ENCODE measurements at regions of chr17 and their contacts with region 1.

Region 1: DNA sequence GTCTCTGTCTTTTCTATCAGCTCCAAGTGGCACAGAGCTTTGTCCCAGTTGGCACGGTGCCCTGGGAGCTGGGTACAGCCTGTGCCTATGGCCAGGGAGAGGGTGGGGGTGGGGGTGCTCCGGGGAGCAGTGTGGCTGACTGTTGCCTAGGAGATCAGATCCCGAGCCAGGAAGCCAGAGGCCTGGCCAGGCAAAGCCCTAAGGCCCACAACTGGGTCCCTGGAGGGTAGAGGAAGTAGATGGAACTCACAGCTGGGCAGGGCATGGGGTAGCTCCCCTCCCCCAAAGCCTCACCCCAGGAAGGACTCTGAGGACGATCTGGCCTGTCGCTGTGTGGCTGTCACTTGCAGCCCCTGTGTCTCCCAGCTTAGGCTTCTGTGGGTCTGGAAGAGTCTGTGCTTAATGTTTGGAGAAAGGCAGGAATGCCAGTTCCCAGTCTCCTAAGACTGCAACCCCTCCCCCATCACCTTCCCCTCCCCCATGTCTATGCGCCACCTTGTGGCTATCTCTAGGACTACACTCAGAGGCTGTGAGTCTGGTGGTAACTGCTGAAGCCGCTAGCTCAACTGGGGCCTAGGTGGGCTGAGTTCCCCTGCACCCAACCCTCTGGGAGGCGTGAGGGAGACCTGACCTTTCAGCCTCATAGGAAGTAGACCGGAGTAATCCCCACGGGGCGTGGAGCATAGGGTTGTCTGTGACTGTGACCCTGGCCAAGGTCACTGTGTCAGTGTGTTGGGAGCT is 12.6 kb downstream of the THRA start:
- DNase-seq: peak; percentile 72
- ATAC-seq: peak; percentile 81
- H3K4me3 Mint-ChIP-seq: no peak overlapping the region
- H3K27ac Mint-ChIP-seq: peak overlapping the region; percentile 62
- H3K4me1 Mint-ChIP-seq: peaks cover 11% of the 10 kb centered on the region
- H3K27me3 Mint-ChIP-seq: no peaks in the 10 kb centered on the region

Region 2: GRCh38 chr17:39980351-39981206 is 94.8 kb before region 1 on chr17 and contains the start of gene PSMD3:
- CTCF ChIA-PET with region 1: interaction called, 12 read pairs
- DNase-seq: peak; percentile 99
- ATAC-seq: peak; percentile 96
- H3K4me3 Mint-ChIP-seq: peak within 1 kb of the TSS; percentile 97
- H3K27ac Mint-ChIP-seq: peak within 1 kb of the TSS; percentile 88
- H3K4me1 Mint-ChIP-seq: peaks cover 34% of the 10 kb centered on the region
- H3K27me3 Mint-ChIP-seq: peaks cover 14% of the 10 kb centered on the region
- total RNA-seq, gene PSMD3: 106 to 138 TPM

Region 3: DNA sequence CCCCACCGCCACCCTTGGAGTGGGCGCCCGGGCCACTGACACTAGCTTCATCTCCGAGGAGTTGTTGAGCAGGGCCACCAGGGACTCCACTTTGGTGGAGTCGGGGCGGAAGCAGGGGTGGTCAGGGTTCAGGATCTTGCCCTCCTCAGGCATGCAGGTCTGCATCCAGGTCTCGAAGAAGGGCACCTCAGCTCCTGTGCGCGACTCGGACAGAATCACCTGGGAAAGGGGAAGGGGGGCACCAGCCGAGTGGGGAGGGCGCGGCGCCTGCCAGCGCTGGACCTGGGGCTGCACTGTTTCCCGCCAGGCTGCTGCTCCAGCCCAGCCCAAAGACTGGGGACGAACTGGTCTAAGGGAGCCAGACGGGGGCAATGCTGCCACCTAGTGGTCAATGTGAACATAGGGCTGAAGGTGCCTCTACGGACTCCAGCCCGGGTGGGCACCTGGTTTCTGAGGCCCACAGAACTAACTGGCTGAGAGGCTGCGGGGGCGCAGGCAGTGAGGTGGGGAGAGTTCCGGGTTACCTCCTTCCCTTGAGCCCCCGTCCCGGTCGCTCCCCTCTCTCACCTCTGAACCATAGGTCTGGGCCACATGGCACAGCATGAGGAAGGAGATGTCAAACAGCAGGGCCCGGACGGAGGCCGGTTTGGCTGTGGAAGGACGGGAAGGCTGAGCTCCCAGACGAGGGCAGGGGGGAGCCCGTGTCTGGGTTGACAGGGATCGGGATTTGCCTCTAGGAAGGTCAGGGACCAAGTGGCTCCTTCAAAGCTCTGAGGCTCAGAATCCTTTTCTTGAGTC is 48.4 kb before region 1 on chr17:
- CTCF ChIA-PET with region 1: interaction called, 11 read pairs
- DNase-seq: peak; percentile 85
- ATAC-seq: peak; percentile 95
- H3K4me3 Mint-ChIP-seq: no peak overlapping the region
- H3K27ac Mint-ChIP-seq: no peak overlapping the region
- H3K4me1 Mint-ChIP-seq: peaks cover 23% of the 10 kb centered on the region
- H3K27me3 Mint-ChIP-seq: no peaks in the 10 kb centered on the region

Region 4: DNA sequence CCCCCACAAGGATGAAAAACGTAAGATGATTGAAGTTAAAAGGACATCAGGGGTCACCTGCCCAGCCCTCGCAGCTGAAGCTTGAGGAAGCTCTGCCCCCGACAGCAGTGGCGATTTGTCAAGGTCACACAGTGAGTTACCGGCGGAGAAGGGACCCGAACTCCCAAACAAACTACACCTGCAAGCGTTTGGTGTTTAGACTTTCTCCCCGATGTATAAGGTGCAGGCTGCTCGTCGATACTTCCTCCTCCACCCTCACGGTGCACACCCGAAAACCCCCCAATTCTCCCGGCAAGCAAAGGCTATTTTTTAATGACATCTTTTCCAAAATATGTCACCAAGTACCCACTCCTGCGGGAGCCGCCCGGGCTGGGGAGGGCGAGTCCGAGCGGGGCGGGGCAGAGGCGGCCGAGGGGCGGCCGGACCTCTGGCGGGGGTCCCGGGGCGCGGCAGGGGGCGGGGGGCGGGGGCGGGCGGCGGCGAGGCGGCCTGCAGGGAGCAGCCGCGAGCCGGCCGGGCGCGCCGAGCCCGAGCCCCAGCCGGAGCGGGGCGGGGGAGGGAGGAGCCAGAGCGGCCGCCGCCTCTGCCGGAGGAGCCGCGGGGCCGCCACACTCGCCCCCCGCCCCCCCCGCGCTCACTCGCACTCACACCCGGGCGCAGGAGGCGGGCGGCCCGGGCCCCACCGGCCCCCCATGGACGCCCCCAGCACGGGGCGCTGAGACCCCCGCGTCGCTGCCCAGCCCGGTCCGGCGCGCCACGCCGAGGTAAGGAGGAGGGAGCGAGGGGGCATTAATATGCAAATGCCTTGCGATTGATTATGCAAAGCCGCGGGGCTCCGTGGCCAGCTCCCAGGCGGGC is 12.8 kb before region 1 on chr17 and contains the start of gene THRA:
- CTCF ChIA-PET with region 1: interaction called, 85 read pairs
- DNase-seq: peak; percentile 75
- ATAC-seq: peak; percentile 94
- H3K4me3 Mint-ChIP-seq: peak within 1 kb of the TSS; percentile 80
- H3K27ac Mint-ChIP-seq: no peak within 1 kb of the TSS
- H3K4me1 Mint-ChIP-seq: peaks cover 25% of the 10 kb centered on the region
- H3K27me3 Mint-ChIP-seq: peaks cover 24% of the 10 kb centered on the region
- total RNA-seq, gene THRA: 5.9 to 8.3 TPM

Region 5: DNA sequence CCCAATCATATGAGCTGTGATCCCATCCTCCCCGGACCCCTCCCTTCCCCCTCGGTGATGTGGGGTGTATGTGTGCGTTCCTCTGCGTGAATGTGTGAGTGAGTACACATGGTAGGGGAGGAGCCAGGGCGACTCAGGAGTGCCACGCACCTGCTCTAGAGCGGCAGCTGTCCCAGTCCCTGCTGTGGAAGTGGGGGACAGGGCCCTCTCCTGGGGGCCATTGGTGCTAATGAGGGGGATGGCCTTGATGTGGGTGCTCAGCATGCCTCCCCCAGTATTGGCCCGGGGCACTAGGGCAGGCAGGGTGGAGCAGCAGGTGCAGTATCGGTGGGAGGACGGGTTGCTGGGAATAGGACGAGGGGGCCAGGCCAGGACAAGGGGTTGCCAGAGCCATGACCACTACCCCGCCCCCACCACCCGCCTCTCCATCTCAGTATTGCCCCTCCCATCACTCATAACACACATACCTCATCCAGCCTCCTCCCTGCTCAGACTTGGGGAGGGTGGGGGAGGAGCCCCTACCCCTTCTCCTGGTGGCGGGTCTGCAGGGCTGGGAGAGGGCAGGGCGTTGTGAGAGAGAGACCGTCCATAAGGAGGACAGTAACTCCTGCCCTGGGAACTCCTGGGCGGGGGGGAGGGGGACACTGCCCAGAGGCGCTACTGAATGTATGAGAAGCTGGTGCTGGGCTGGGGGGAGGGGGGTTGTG is 16.5 kb after region 1 on chr17:
- CTCF ChIA-PET with region 1: interaction called, 59 read pairs
- DNase-seq: no peak
- ATAC-seq: no peak
- H3K4me3 Mint-ChIP-seq: no peak overlapping the region
- H3K27ac Mint-ChIP-seq: no peak overlapping the region
- H3K4me1 Mint-ChIP-seq: peaks cover 26% of the 10 kb centered on the region
- H3K27me3 Mint-ChIP-seq: no peaks in the 10 kb centered on the region

Region 6: DNA sequence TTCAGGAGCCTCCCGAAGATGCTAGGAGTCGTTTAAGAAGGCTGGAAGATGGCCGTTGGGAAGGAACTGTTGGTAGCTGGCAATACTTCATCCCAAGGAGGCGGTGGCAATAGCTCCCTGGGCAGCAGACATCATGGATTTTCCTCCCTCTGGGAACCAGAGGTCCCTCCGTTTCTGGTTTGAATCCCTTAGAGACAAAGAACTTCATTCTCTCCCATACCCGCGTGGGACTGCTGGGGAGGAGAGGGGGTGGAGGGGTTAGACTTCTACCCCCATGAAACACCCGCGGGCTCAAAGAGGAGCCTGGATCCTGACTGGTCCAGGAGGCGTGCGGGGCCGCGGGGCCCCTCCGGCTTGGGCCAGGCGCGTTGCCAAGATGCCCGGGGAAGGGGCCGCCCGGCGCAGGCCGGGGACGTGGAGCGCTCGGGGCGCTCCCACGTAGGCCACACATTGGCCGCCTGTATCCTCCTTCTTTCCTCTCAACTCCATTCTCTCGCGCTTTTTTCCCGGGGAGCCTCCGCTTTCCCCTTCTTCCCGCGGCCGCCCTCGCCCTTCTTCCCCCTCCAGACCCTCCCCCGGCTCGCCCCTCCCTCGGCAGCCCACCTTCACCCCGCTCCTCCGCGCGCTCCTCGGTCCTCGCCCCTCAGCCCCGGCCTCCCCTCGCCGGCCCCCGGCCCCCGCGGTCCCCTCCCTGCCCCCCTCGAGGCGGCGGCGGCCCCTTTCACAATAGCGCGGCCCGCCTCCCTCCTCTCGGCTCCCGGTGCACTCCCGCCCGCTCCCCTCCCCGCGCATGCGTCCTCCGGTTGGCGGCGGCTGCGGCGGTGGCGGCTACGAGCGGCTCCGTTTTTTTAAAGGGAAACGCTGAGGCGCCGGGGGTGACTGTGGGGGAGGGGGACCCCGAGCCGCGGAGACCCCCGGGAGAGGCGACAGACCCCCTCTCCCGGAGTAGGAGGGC is 46.1 kb after region 1 on chr17 and contains the start of gene MSL1:
- CTCF ChIA-PET with region 1: interaction called, 13 read pairs
- DNase-seq: peak; percentile 86
- ATAC-seq: peak; percentile 73
- H3K4me3 Mint-ChIP-seq: peak within 1 kb of the TSS; percentile 74
- H3K27ac Mint-ChIP-seq: peak within 1 kb of the TSS; percentile 74
- H3K4me1 Mint-ChIP-seq: peaks cover 30% of the 10 kb centered on the region
- H3K27me3 Mint-ChIP-seq: no peaks in the 10 kb centered on the region
- total RNA-seq, gene MSL1: 91.4 to 94.7 TPM

Measured in activated CD8-positive, alpha-beta memory T cell treated with anti-CD3 and anti-CD28 coated beads, Interleukin-2, amount 10 ng/mL, durations not matched to agents 7 days and 5 days (primary cell).